ENCODE measurements at regions of chr7 and their contacts with region 1.

Region 1: DNA sequence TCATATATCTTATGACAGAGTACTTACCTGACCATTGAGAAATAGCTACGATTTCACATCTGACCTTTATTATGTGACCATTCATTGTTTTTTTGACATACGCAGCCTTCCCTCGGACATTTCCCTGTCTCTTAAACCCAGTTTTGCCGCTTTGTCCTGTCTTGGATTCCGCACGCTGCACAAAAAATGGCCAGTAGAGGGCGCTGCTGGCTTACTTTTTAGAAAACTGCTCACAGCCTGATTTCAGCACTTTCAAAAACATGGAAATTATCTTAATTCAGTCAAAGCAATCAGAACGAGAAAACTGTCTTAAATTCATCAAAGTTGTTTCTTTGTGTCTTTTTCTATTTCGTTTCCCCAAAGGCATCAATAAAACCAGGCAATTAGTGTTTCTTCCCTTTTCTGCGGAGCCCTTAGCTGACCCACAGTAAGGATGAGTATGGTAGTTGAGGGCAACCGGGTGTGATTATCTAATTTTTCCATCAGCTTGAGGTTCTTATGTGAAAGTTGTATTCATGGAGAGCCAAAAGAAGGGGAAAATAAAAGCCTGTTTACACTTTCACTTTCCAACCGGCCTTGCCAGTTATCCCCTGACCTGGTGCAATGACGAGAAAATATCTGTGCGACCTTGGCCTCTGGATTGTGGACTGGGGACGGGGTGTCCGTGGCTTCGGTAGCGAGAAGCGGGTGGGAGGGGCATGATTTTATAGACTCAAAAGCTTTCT is 144.4 kb downstream of the DYNC1I1 start:
- DNase-seq: peak; percentile 35
- H3K4me3 ChIP-seq: no peak overlapping the region
- H3K27ac ChIP-seq: no peak overlapping the region
- H3K4me1 ChIP-seq: no peaks in the 10 kb centered on the region
- H3K27me3 ChIP-seq: no peaks in the 10 kb centered on the region
- CTCF ChIP-seq: peak; percentile 85 to 92

Region 2: GRCh38 chr7:95491634-95492320 is 425.0 kb before region 1 on chr7:
- CTCF ChIA-PET with region 1: no interaction called
- dilution Hi-C with region 1: no loop called
- in situ Hi-C with region 1: no loop called
- intact Hi-C with region 1: no loop called
- DNase-seq: peak; percentile 98
- H3K4me3 ChIP-seq: no peak overlapping the region
- H3K27ac ChIP-seq: no peak overlapping the region
- H3K4me1 ChIP-seq: peaks cover 19% of the 10 kb centered on the region
- H3K27me3 ChIP-seq: peaks cover 10% of the 10 kb centered on the region
- CTCF ChIP-seq: no peak

Region 3: GRCh38 chr7:95897557-95898251 is 19.0 kb before region 1 on chr7:
- CTCF ChIA-PET with region 1: no interaction called
- dilution Hi-C with region 1: no loop called
- in situ Hi-C with region 1: no loop called
- intact Hi-C with region 1: no loop called
- DNase-seq: no peak
- H3K4me3 ChIP-seq: no peak overlapping the region
- H3K27ac ChIP-seq: no peak overlapping the region
- H3K4me1 ChIP-seq: no peaks in the 10 kb centered on the region
- H3K27me3 ChIP-seq: no peaks in the 10 kb centered on the region
- CTCF ChIP-seq: no peak

Region 4: DNA sequence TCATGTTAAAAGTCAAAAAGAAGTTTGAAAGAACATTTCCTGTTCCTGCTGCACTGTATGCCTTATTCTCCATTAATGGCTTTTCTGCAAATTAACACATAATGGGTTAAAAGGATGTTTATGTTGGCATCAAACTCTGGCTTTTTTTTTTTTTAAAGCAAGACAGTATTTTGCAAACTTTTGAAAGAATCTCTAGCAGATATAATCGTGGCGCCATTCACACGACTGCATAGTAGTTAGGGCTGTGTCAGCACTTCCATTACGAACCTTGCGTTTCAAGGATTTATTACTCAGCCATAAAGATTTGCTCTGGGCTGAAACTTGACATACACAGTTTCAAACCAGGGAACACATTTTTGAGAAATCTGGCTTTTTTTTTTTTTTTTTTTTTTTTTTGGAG is 63.4 kb after region 1 on chr7:
- CTCF ChIA-PET with region 1: no interaction called
- dilution Hi-C with region 1: no loop called
- in situ Hi-C with region 1: no loop called
- intact Hi-C with region 1: no loop called
- DNase-seq: no peak
- H3K4me3 ChIP-seq: no peak overlapping the region
- H3K27ac ChIP-seq: no peak overlapping the region
- H3K4me1 ChIP-seq: no peaks in the 10 kb centered on the region
- H3K27me3 ChIP-seq: no peaks in the 10 kb centered on the region
- CTCF ChIP-seq: no peak

Region 5: GRCh38 chr7:96075510-96076349 is 159.0 kb after region 1 on chr7:
- CTCF ChIA-PET with region 1: no interaction called
- dilution Hi-C with region 1: no loop called
- in situ Hi-C with region 1: no loop called
- intact Hi-C with region 1: loop called (anchors 2 kb)
- DNase-seq: peak; percentile 26
- H3K4me3 ChIP-seq: peak overlapping the region; percentile 50 to 74 (median 61)
- H3K27ac ChIP-seq: no peak overlapping the region
- H3K4me1 ChIP-seq: peaks cover 12% of the 10 kb centered on the region
- H3K27me3 ChIP-seq: no peaks in the 10 kb centered on the region
- CTCF ChIP-seq: peak; percentile 79 to 91

Region 6: GRCh38 chr7:96157856-96158255 is 241.1 kb after region 1 on chr7:
- CTCF ChIA-PET with region 1: no interaction called
- dilution Hi-C with region 1: no loop called
- in situ Hi-C with region 1: no loop called
- intact Hi-C with region 1: no loop called
- DNase-seq: no peak
- H3K4me3 ChIP-seq: no peak overlapping the region
- H3K27ac ChIP-seq: no peak overlapping the region
- H3K4me1 ChIP-seq: no peaks in the 10 kb centered on the region
- H3K27me3 ChIP-seq: no peaks in the 10 kb centered on the region
- CTCF ChIP-seq: no peak

Region 7: DNA sequence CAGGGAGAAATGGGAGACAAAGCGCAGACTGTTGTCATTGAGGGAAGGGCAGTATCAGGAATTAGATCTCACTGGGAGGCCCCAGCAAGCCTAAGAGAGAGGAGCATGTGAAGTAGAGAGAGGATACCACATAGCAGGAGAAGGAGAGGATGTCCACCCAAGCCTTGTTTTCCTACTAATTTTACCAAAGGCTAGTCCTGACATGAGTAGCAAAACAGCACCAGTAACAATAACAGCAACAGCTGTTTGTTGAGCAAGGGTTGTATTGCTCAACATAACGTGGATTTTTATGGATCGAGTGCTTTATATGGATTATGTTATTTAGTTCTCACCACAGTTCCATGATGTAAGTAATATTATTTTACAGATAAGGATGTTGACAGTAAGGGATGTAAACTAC is 953.4 kb after region 1 on chr7:
- CTCF ChIA-PET with region 1: no interaction called
- dilution Hi-C with region 1: no loop called
- in situ Hi-C with region 1: no loop called
- intact Hi-C with region 1: loop called (anchors 10 kb)
- DNase-seq: peak; percentile 68
- H3K4me3 ChIP-seq: no peak overlapping the region
- H3K27ac ChIP-seq: peak overlapping the region; percentile 42
- H3K4me1 ChIP-seq: peaks cover 19% of the 10 kb centered on the region
- H3K27me3 ChIP-seq: no peaks in the 10 kb centered on the region
- CTCF ChIP-seq: no peak

Region 8: GRCh38 chr7:97064967-97065587 is 1148.3 kb after region 1 on chr7:
- CTCF ChIA-PET with region 1: no interaction called
- dilution Hi-C with region 1: no loop called
- in situ Hi-C with region 1: no loop called
- intact Hi-C with region 1: loop called (anchors 1 kb)
- DNase-seq: peak; percentile 34
- H3K4me3 ChIP-seq: no peak overlapping the region
- H3K27ac ChIP-seq: no peak overlapping the region
- H3K4me1 ChIP-seq: no peaks in the 10 kb centered on the region
- H3K27me3 ChIP-seq: no peaks in the 10 kb centered on the region
- CTCF ChIP-seq: peak; percentile 69 to 76

Region 9: GRCh38 chr7:97845622-97846203 is 1929.0 kb after region 1 on chr7:
- CTCF ChIA-PET with region 1: no interaction called
- dilution Hi-C with region 1: no loop called
- in situ Hi-C with region 1: no loop called
- intact Hi-C with region 1: loop called (anchors 5 kb)
- DNase-seq: no peak
- H3K4me3 ChIP-seq: no peak overlapping the region
- H3K27ac ChIP-seq: no peak overlapping the region
- H3K4me1 ChIP-seq: no peaks in the 10 kb centered on the region
- H3K27me3 ChIP-seq: no peaks in the 10 kb centered on the region
- CTCF ChIP-seq: peak; percentile 25 to 44

Measured in mammary epithelial cell (primary cell).